ENCODE measurements at regions of chr12 and their contacts with region 1.

Region 1: GRCh38 chr12:120713861-120714482 is 3.7 kb downstream of the UNC119B start:
- DNase-seq: no peak

Region 2: DNA sequence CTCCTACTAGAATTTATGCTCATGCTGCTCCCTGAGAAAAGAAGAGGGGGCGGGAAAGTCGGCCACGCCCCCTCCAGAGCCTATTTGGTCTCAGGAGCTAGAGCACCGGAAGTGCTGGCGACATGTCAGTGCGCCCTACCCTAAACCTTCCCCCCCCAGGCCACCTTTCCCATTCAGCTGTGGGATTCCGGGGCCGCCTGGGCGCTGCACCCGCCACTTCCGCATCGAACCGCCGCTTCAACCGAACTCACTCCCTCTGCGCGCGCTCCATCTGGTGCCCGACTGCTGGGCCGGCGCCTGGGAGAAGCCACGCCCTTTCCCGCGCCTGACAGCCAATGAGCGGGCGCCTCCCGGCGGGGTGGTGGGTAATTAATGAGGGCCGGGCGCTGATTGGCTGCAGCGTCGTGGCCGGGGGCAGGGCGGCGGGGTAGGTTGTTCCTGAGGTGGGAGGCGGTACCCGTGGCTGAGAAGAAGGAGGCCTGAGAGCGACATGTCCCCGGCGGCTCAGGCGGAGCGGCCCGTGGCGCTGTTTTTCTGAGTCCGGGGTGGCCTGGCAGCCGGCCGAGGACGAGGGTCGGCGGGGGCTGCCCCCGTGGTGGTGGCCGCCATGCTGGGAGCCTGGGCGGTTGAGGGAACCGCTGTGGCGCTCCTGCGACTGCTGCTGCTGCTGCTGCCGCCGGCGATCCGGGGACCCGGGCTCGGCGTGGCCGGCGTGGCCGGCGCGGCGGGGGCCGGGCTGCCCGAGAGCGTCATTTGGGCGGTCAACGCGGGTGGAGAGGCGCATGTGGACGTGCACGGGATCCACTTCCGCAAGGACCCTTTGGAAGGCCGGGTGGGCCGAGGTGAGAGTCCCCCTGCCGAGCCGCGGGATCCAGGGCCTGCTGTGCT is 27.0 kb before region 1 on chr12 and contains the start of gene MLEC:
- intact Hi-C with region 1: loop called (anchors 2 kb)
- DNase-seq: peak; percentile 99
- total RNA-seq, gene MLEC: 103 TPM